GM10248 (cell line): ENCODE measurements at regions of chr14 and their contacts with region 1.

Region 1: DNA sequence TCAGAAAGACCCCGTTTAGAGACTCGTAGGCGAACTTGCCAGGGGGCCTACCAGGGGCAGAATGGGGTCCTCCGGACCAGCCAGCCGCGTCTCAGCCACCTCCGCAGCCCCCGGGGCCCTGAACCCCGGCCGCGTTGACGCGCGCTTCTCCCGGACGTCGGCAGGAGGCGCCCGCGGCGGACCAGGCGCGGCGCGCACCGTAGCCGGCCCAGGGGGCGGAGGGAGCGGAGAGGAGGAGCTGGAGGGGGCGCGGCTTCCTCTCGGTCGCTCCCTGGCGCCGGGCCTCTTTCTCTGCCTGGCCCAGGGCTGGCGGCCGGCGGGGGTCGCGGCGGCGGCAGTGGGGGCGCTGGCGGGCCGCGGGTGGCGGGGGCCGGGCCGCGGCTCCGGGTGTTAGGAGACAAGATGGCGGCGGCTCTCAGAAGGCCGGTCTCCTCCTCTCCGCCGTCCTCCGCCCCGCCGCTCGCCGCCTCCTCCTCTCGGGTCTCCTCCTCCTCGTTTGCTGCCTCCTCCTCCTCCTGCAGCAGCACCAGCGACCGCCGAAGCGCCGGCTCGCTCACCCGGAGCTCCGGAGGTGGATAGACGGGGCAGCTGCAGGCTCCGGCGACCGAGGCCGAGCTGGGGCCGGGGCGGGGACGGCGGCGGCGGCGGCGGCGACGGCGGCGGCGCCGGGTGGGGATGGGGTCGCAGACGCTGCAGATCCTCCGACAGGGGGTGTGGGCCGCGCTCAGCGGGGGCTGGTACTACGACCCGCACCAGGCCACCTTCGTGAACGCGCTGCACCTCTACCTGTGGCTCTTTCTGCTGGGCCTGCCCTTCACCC is at the start of gene PCNX1:
- DNase-seq: peak; percentile 93
- CTCF ChIP-seq: peak; percentile 89

Region 2: DNA sequence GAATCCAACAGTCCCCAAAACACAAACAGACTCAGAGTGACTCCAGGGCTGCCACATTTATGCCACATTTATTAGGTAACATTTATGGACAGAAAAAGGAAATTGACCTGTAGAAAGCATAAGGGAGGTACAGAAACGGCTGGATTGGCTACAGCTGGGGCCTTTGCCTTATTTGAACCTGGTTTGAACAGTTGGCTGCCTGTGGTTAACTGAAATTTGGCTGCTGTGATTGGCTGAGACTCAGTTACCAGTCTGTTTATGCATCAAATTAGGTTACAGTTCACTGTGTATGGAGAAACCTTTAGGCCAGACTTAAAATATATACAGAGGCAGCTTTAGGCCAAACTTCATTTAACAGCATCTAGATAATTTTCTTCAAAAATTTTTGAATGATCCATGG is 27.9 kb before region 1 on chr14:
- CTCF ChIA-PET with region 1: interaction called, 103 read pairs
- POLR2A ChIA-PET with region 1: no interaction called
- DNase-seq: no peak
- CTCF ChIP-seq: no peak

Region 3: GRCh38 chr14:70919774-70920173 is 12.4 kb after region 1 on chr14:
- CTCF ChIA-PET with region 1: interaction called, 46 read pairs
- POLR2A ChIA-PET with region 1: interaction called, 7 read pairs
- DNase-seq: no peak
- CTCF ChIP-seq: no peak

Region 4: DNA sequence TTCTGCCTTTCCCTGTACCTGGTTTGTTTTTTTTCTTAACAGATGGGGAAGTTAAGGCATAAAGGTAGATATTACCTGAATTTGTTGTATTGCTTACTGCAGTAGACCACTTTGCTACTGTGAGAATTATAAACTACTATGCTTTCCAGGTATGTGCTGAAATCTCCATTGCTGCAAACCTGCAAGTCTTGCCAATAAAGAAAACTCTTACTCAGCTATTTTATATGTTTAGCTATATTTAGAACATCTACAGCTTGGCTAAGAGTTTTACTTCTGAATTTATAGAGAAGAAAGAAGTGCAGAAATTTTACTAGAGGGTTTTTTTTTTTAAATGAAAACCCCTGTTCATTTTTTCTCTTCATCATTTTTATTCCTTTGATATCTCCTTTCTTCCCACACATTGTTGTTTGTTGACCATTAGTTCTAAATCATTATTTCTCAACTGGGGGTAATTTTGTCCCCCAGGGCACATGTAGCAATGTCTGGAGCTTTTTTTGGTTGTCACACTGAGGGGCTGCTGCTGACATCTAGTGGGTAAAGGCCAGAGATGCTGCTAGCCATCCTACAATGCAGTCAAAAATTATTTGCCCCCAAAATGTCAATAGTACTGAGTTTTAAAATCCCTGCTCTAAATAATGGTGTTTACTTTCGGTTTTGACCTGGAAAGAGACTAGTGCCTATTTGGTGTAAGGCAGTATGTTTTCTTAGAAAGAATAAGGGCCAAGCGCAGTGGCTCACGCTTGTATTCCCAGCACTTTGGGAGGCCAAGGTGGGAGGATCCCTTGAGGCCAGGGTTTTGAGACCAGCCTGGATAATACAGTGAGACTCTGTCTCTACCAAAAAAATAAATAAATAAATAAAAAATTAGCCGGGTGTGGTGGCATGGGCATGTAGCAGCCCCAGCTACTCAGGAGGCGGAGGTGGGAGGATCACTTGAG is 48.4 kb after region 1 on chr14:
- CTCF ChIA-PET with region 1: interaction called, 15 read pairs
- POLR2A ChIA-PET with region 1: no interaction called
- DNase-seq: peak; percentile 13
- CTCF ChIP-seq: peak; percentile 68

Region 5: GRCh38 chr14:70972107-70972976 is 65.0 kb after region 1 on chr14:
- CTCF ChIA-PET with region 1: interaction called, 17 read pairs
- POLR2A ChIA-PET with region 1: no interaction called
- DNase-seq: peak; percentile 64
- CTCF ChIP-seq: peak; percentile 85

Region 6: DNA sequence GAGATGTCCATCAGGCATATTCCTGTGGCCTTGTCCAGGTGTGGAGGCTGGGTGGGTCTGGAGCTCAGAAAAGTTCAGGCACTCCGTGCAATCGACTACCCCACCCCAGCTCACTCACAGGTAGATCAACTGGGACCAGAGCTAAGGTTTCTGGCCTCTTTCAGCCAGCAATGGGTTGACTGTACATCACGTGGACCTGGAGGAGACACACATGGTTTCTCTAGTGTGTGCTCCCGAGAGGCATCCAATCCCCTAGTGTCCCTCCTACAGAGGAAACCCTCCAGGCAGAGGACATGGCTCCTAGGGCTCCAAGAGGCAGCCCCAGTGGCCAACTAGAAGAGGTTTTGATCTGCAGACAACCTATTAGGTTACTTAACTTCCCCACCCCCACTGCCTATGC is 905.3 kb after region 1 on chr14:
- CTCF ChIA-PET with region 1: no interaction called
- POLR2A ChIA-PET with region 1: no interaction called
- DNase-seq: no peak
- CTCF ChIP-seq: no peak